PC-9 (cell line): ENCODE measurements at regions of chr18 and their contacts with region 1.

Region 1: DNA sequence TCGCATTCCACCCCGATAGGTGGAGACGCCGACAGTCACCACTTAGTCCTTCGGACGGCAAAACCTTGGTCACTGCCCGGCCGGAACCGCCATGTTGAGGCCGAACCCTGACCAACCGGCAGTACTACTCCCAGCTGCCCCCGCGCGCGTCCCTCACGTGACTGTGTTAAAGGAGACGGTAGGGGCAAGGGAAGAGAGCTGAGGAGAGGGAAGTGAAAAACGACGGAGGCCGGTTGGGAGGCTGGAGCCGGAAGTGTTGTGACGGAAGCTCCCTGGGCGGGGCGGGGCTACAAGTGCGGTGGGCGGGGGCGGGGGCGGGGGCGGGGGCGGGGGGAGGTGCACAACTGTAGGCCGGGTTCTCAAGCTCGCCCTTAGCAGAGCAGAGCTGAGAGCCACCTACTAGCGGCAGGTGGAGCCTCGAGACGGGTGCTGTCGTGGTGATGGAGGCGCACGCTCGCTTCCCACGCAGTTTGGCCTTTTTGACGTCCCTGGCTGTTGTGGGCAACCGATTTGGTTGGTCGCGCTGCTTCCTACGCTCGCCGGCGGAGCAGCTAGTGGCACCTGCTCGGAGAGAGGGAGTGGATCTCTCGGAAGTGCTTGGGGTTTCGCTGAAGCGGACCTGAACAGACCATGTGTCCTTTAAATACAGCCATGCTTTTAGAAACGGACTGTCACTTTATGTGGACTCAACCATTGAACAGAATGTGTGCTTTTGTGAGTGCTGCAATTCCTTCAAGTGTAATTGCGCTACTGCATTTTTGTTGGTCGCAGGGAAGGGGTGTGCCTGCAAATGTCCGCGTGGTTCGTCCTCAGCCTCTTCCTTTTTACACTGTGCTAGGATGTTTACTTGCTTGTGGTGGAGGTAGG is at the start of gene TRAPPC8:
- DNase-seq: peak; percentile 86 to 88
- H3K4me3 ChIP-seq: peak within 1 kb of the TSS; percentile 90
- H3K27ac ChIP-seq: peak within 1 kb of the TSS; percentile 80
- H3K4me1 ChIP-seq: peaks cover 11% of the 10 kb centered on the region
- H3K27me3 ChIP-seq: no peaks in the 10 kb centered on the region
- CTCF ChIP-seq: no peak
- total RNA-seq, gene TRAPPC8: 20.9 and 21.7 TPM in 2 replicates

Region 2: DNA sequence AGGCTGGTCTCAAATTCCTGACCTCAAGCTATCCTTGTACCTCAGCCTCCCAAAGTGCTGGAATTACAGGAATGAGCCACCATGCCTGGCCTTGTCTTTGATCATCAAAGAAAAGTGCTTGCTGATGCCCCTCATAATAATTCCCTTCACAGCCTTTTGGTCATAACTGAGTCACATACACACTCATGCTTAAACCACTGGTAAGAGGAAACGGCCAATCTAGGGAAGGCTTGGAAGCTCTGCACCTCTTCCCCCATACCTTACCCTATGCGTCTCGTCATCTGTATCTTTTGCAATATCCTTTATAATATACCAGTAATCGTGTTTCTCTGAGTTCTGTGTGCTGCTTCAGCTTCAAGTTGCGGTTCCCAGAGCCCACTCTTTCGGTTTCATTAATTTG is 143.6 kb after region 1 on chr18:
- CTCF ChIA-PET with region 1: no interaction called
- POLR2A ChIA-PET with region 1: interaction called, 15 read pairs
- intact Hi-C with region 1: loop called (anchors 5 kb)
- DNase-seq: no peak
- H3K4me3 ChIP-seq: no peak overlapping the region
- H3K27ac ChIP-seq: no peak overlapping the region
- H3K4me1 ChIP-seq: peaks cover 5% of the 10 kb centered on the region; the same call in 1 of the 2 replicates
- H3K27me3 ChIP-seq: no peaks in the 10 kb centered on the region
- CTCF ChIP-seq: no peak

Region 3: DNA sequence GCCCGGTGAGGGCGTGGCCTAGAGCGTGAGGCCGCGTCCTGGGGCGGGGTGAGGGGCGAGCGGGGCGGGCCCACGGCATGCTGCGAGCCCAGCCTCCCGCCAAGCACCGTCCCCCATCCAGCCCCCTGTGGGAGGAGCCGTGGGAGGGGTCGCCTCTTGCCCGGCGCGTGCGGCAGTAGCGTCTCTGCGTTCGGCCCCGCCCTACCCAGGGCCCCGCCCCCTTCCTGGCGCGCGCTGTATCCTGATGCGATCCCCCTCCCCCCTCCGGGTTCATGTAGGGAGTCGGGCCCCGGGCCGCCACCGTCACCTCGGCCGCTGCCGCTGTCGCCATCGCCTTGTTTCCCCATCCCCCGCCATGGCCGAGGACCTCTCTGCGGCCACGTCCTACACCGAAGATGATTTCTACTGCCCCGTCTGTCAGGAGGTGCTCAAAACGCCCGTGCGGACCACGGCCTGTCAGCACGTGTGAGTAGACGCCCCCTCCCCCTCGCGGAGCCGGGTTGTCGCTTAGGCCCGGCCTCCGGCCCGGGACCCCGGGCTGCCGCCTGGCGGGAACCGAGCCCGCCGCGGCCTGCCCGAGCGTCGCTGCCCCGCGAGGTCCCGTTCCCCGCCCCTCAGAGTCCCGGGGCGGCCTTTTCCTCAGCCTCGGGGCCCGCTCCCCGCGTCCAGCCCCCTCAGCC is 149.3 kb after region 1 on chr18:
- CTCF ChIA-PET with region 1: no interaction called
- POLR2A ChIA-PET with region 1: no interaction called
- intact Hi-C with region 1: loop called (anchors 5 kb)
- DNase-seq: peak; percentile 74 to 94
- H3K4me3 ChIP-seq: peak overlapping the region; percentile 80
- H3K27ac ChIP-seq: peak overlapping the region; percentile 94
- H3K4me1 ChIP-seq: no peaks in the 10 kb centered on the region
- H3K27me3 ChIP-seq: no peaks in the 10 kb centered on the region
- CTCF ChIP-seq: no peak